ENCODE measurements at regions of chr18 and their contacts with region 1.

Region 1: GRCh38 chr18:59823596-59824195 is 76.1 kb upstream of the PMAIP1 start:
- DNase-seq: peak; percentile 51
- H3K4me3 ChIP-seq: no peak overlapping the region
- H3K27ac ChIP-seq: no peak overlapping the region
- H3K4me1 ChIP-seq: no peaks in the 10 kb centered on the region
- H3K27me3 ChIP-seq: no peaks in the 10 kb centered on the region
- CTCF ChIP-seq: peak; percentile 52 to 69
- POLR2A ChIP-seq: no peak

Region 2: GRCh38 chr18:59459369-59460079 is 364.2 kb before region 1 on chr18:
- CTCF ChIA-PET with region 1: interaction called, 413 read pairs
- POLR2A ChIA-PET with region 1: no interaction called
- dilution Hi-C with region 1: no loop called
- intact Hi-C with region 1: no loop called
- DNase-seq: peak; percentile 28
- H3K4me3 ChIP-seq: no peak overlapping the region
- H3K27ac ChIP-seq: no peak overlapping the region
- H3K4me1 ChIP-seq: no peaks in the 10 kb centered on the region
- H3K27me3 ChIP-seq: no peaks in the 10 kb centered on the region
- CTCF ChIP-seq: peak; percentile 17 to 40
- POLR2A ChIP-seq: no peak

Region 3: GRCh38 chr18:59631583-59632181 is 192.0 kb before region 1 on chr18:
- CTCF ChIA-PET with region 1: interaction called, 573 read pairs
- POLR2A ChIA-PET with region 1: no interaction called
- dilution Hi-C with region 1: no loop called
- intact Hi-C with region 1: loop called (anchors 1 kb)
- DNase-seq: peak; percentile 21
- H3K4me3 ChIP-seq: no peak overlapping the region
- H3K27ac ChIP-seq: no peak overlapping the region
- H3K4me1 ChIP-seq: no peaks in the 10 kb centered on the region
- H3K27me3 ChIP-seq: peaks cover 0 to under 1% of the 10 kb centered on the region in 2 experiments
- CTCF ChIP-seq: peak; percentile 30 to 38
- POLR2A ChIP-seq: no peak

Region 4: DNA sequence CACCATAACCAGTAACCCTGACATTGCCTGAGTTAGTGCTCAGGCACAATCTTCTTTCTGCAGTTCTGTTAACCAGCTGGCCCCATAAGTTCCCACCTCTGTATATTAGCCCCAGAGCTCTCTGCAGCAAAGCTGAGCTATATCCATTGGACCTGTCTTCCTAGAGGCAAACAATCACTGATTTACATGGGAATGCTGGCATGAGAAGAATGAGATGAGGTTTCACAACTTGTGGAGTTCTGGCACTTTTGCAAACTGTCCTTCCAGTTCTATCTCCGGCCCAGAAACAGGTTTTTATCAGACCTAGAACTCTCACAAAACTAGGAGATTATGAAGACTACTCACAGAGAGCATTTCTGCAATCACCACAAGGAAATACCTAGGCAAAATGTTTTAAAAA is 118.6 kb before region 1 on chr18:
- CTCF ChIA-PET with region 1: interaction called, 18 read pairs
- POLR2A ChIA-PET with region 1: no interaction called
- dilution Hi-C with region 1: no loop called
- intact Hi-C with region 1: no loop called
- DNase-seq: no peak
- H3K4me3 ChIP-seq: no peak overlapping the region
- H3K27ac ChIP-seq: no peak overlapping the region
- H3K4me1 ChIP-seq: no peaks in the 10 kb centered on the region
- H3K27me3 ChIP-seq: no peaks in the 10 kb centered on the region
- CTCF ChIP-seq: no peak
- POLR2A ChIP-seq: no peak

Region 5: DNA sequence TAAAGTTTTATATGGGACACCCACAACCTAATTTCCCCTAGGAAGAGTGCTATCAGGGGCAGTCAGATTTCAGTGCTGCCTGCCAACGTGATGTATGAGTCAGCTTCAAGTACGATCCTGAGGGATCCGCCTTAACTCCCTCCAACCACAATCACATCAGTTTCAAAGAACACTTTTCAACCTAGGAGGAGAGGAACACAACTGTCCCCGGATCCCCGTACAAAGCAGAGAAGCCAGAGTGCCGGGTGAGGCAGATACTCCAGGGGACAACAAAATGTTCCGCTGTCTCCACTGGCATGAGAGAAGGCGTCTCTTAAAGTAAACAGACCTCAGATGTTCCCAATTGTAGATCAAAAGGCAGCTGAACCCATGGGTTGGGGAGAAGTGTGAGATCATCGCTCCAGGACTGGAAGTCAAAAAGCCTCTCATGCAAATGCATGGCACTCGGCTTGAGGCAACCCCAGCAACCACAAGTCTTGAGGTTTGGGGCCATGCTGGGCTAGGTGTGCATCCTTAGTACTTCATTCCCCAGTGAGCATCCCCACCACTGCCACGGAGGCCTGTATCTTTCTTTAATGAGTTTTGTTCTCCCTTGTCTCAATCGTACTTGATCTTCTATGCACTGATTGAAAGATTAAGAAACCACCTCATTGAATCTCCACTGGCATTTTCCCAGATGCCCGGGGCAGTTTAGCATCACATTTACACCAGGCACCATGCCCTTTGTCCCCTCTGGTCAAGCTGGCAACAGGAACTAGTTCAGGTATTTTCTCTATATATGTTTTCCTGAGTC is 35.5 kb before region 1 on chr18:
- CTCF ChIA-PET with region 1: interaction called, 134 read pairs
- POLR2A ChIA-PET with region 1: interaction called, 3 read pairs
- dilution Hi-C with region 1: no loop called
- intact Hi-C with region 1: loop called (anchors 2 kb)
- DNase-seq: no peak
- H3K4me3 ChIP-seq: no peak overlapping the region
- H3K27ac ChIP-seq: no peak overlapping the region
- H3K4me1 ChIP-seq: no peaks in the 10 kb centered on the region
- H3K27me3 ChIP-seq: no peaks in the 10 kb centered on the region
- CTCF ChIP-seq: no peak
- POLR2A ChIP-seq: no peak

Region 6: GRCh38 chr18:60446821-60447220 is 623.1 kb after region 1 on chr18:
- CTCF ChIA-PET with region 1: no interaction called
- POLR2A ChIA-PET with region 1: no interaction called
- dilution Hi-C with region 1: loop called (anchors 25 kb)
- intact Hi-C with region 1: no loop called
- DNase-seq: no peak
- H3K4me3 ChIP-seq: no peak overlapping the region
- H3K27ac ChIP-seq: no peak overlapping the region
- H3K4me1 ChIP-seq: no peaks in the 10 kb centered on the region
- H3K27me3 ChIP-seq: no peaks in the 10 kb centered on the region
- CTCF ChIP-seq: no peak
- POLR2A ChIP-seq: no peak

Measured in endothelial cell of umbilical vein (primary cell).